ENCODE measurements at regions of chr6 and their contacts with region 1.

Region 1: DNA sequence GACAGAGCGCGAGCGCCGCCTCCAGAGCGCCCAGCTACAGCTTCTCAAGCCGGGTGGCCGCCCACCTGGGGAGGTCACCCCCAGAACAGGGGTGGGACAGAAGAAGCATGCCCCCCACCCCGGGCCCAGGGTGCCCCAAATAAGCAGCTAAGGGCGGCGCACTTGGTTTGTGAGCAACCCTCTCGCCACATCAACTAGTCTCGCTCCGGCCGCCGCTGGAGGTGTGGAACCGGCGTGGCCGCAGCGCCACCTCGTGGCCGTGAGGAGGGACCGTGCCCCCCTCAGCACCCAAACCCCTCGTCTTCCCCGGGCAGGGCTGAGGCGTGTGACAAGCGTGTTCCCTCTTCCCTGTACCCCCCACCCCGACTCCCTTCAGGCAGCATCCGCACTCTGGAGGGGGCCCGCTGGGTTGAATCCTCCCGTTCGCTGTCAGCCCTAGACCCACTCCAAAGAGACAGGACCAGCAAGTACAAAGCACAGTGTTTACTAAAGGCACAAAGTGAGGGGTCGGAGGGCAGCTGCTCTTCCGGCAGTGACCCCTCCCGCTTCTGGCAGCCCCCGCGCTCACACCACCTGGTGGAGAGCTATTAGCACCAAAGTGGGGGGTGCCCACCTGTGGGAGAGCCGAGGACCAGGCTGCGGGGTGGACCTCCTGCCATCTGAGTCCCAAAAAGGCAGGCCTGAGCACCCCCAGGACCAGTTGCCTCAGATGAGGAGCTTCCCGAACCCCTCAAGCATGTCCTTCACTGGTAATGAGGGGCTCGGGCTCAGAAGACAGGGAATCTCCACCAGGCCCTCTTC is 45.4 kb downstream of the MDFI start:
- DNase-seq: peak; percentile 83 to 91
- ATAC-seq: peak; percentile 79 to 87 (median 81)
- H3K4me3 ChIP-seq: peak overlapping the region; percentile 62
- H3K27ac ChIP-seq: peak overlapping the region; percentile 36
- H3K4me1 ChIP-seq: peaks cover 22% of the 10 kb centered on the region
- H3K27me3 ChIP-seq: peaks cover 0 to under 1% (median 0%) of the 10 kb centered on the region in 3 donors
- CTCF ChIP-seq: peak; percentile 84

Region 2: DNA sequence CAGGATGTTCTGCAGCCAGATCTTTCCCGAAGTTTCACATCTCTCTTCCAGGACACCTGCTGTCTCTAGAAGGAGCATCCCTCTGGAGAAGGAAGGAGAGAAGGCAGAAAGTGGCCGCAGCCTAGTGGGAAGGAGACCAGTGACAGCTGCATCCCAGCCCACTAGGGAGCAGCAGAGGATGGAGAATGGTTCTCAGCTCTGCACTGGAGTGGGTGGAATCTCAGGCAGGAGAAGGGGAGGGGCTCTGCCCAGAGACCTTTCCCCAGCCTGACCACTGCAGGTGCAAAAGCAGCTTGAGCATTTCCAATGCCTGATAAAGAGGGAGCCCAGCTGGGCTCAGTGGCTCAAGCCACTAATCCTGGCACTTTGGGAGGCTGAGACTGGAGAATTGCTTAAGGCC is 316.0 kb before region 1 on chr6:
- intact Hi-C with region 1: loop called (anchors 1 to 5 kb)
- DNase-seq: no peak
- ATAC-seq: peak in 3 of 4 donors; percentile 36 to 49 (median 46)
- H3K4me3 ChIP-seq: no peak overlapping the region
- H3K27ac ChIP-seq: no peak overlapping the region
- H3K4me1 ChIP-seq: peaks cover 2% of the 10 kb centered on the region
- H3K27me3 ChIP-seq: peaks cover 0 to 79% (median 22%) of the 10 kb centered on the region in 3 donors
- CTCF ChIP-seq: peak; percentile 47

Region 3: DNA sequence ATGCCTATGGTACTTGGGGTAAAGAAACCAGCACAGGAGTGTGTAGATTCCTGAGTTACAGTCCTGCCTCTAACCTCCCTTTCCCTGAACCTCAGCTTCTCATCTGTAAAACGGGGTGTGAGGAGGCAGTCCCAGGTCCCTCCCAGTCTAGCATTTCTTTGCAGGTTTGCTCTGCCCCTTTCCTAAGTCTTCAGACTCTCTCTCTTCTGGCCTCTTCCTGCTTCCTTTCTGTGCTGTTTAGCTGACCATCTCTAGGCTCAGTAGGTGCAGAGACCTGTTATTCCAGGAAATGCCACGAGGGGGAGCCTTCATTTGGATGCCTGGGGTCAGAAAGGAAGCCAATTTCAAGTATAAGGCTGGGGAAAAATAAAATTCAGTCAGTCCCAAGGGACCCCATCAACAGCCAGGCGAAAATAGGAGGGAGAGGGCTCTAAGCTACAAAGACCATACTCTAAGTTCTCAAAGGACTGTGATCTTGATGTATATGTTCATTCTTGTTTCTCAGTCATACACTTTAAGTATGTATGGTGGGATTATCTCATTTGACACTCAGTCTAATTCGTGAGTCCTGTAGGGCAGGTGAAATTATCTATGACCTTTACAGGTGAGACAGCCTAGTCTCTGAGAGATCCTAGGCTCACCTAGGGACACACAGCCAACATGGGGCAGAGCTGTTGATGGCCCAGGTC is 259.2 kb before region 1 on chr6:
- intact Hi-C with region 1: loop called in 1 of 2 experiments (anchors 2 kb)
- DNase-seq: peak; percentile 74 to 79
- ATAC-seq: peak; percentile 55 to 75 (median 66)
- H3K4me3 ChIP-seq: no peak overlapping the region
- H3K27ac ChIP-seq: no peak overlapping the region
- H3K4me1 ChIP-seq: peaks cover 6% of the 10 kb centered on the region
- H3K27me3 ChIP-seq: peaks cover 0 to 15% (median 0%) of the 10 kb centered on the region in 3 donors
- CTCF ChIP-seq: peak; percentile 83

Region 4: GRCh38 chr6:41455818-41456217 is 227.9 kb before region 1 on chr6:
- intact Hi-C with region 1: loop called (anchors 5 to 10 kb)
- DNase-seq: no peak
- ATAC-seq: no peak
- H3K4me3 ChIP-seq: no peak overlapping the region
- H3K27ac ChIP-seq: no peak overlapping the region
- H3K4me1 ChIP-seq: peaks cover 17% of the 10 kb centered on the region
- H3K27me3 ChIP-seq: peaks cover 0 to 9% (median 0%) of the 10 kb centered on the region in 3 donors
- CTCF ChIP-seq: no peak

Region 5: GRCh38 chr6:41463062-41463930 is 220.4 kb before region 1 on chr6:
- intact Hi-C with region 1: loop called (anchors 5 to 10 kb)
- DNase-seq: peak; percentile 66 to 76
- ATAC-seq: peak; percentile 89 to 95 (median 92)
- H3K4me3 ChIP-seq: no peak overlapping the region
- H3K27ac ChIP-seq: no peak overlapping the region
- H3K4me1 ChIP-seq: peaks cover 3% of the 10 kb centered on the region
- H3K27me3 ChIP-seq: peaks cover 0 to 20% (median 0%) of the 10 kb centered on the region in 3 donors
- CTCF ChIP-seq: peak; percentile 65

Region 6: GRCh38 chr6:41602864-41603608 is 80.7 kb before region 1 on chr6:
- intact Hi-C with region 1: loop called (anchors 1 to 2 kb)
- DNase-seq: peak; percentile 78 to 84
- ATAC-seq: peak; percentile 75 to 91 (median 81)
- H3K4me3 ChIP-seq: peak overlapping the region; percentile 31
- H3K27ac ChIP-seq: no peak overlapping the region
- H3K4me1 ChIP-seq: peaks cover 4% of the 10 kb centered on the region
- H3K27me3 ChIP-seq: no peaks in the 10 kb centered on the region
- CTCF ChIP-seq: peak; percentile 90